ENCODE measurements at regions of chr15 and their contacts with region 1.

Region 1: DNA sequence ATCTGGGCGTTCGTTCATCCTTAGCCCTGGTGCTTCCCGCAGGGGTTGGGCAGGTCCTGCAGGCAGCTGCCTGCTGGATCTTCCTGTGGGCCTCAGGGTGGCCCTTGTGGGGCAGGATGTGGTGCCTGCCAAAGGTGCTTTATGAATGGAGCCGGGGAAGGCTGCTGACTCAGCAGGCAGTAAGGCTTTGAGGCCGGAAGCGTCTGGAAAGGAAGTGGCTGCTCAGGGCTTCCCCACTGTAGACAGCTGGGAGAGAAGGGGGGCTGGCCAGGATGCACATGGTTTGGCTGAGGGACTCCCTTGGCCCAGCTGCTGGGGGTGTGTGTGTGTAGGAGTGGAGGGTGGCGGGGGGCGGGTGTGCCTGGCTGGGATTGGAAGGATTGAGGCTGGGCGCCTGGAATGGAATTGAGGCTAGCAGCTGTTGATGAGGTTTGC is 12.9 kb downstream of the CD276 start:
- DNase-seq: peak; percentile 81 to 95
- H3K4me3 ChIP-seq: no peak overlapping the region
- CTCF ChIP-seq: no peak
- POLR2A ChIP-seq: no peak

Region 2: GRCh38 chr15:72047020-72047419 is 1650.0 kb before region 1 on chr15:
- intact Hi-C with region 1: no loop called
- DNase-seq: no peak
- H3K4me3 ChIP-seq: no peak overlapping the region
- CTCF ChIP-seq: no peak
- POLR2A ChIP-seq: no peak

Region 3: GRCh38 chr15:73560501-73561117 is 136.4 kb before region 1 on chr15:
- intact Hi-C with region 1: loop called (anchors 5 kb)
- DNase-seq: no peak
- H3K4me3 ChIP-seq: no peak overlapping the region
- CTCF ChIP-seq: no peak
- POLR2A ChIP-seq: no peak

Region 4: GRCh38 chr15:73633111-73633990 is 63.7 kb before region 1 on chr15 and contains the start of gene NPTN:
- intact Hi-C with region 1: loop called (anchors 2 kb)
- DNase-seq: peak; percentile 98 to 99
- H3K4me3 ChIP-seq: peak within 1 kb of the TSS; percentile 94
- CTCF ChIP-seq: no peak
- POLR2A ChIP-seq: no peak
- total RNA-seq, gene NPTN: 124 to 181 (median 150) TPM

Region 5: DNA sequence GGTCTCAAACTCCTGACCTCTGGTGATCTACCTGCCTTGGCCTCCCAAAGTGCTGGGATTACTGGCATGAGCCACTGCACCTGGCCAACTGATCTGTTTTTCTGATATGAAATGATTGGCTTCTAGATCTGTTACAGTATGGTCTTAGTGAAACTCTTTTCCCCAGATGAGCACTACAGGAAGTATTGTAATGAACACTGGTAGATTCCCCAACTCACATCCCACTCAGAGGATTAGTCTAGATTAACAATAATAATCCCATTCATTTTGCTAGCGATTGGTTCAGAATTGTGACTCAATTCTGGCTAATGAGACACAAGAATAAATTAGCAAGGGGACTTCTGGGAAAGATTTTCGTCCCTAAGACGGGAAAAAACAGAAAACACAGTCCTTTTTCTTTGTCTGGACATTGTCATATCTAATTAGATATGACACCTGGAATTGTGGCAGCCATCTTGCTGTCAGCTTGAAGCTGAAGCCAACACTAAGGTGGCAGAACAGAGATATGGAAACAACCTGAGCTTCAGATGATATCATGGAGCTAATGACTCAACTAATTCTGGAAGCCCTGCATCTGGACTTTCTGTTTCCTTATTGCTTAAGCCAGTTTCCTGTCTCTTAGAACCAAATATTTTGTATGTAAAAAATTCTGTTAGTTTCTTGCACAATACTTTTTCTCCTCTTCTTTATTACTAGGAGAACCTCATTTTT is 46.5 kb before region 1 on chr15:
- intact Hi-C with region 1: no loop called
- DNase-seq: no peak
- H3K4me3 ChIP-seq: no peak overlapping the region
- CTCF ChIP-seq: no peak
- POLR2A ChIP-seq: no peak

Measured in lower leg skin (tissue), 4 donors.